B cell (primary cell): ENCODE measurements at regions of chr22 and their contacts with region 1.

Region 1: GRCh38 chr22:40922484-40923303 is 28.5 kb upstream of the RBX1 start:
- DNase-seq: peak; percentile 83
- ATAC-seq: peak; percentile 94
- H3K4me3 ChIP-seq: peak overlapping the region in 2 of 5 experiments; percentile 12 to 47
- H3K4me3 Mint-ChIP-seq: peak overlapping the region; percentile 67
- H3K27ac ChIP-seq: no peak overlapping the region
- H3K27ac Mint-ChIP-seq: peak overlapping the region; percentile 32
- H3K4me1 ChIP-seq: peaks cover 4 to 5% of the 10 kb centered on the region in 2 donors
- H3K4me1 Mint-ChIP-seq: peaks cover 4% of the 10 kb centered on the region
- H3K27me3 ChIP-seq: no peaks in the 10 kb centered on the region
- H3K27me3 Mint-ChIP-seq: no peaks in the 10 kb centered on the region
- CTCF ChIP-seq: peak; percentile 87

Region 2: DNA sequence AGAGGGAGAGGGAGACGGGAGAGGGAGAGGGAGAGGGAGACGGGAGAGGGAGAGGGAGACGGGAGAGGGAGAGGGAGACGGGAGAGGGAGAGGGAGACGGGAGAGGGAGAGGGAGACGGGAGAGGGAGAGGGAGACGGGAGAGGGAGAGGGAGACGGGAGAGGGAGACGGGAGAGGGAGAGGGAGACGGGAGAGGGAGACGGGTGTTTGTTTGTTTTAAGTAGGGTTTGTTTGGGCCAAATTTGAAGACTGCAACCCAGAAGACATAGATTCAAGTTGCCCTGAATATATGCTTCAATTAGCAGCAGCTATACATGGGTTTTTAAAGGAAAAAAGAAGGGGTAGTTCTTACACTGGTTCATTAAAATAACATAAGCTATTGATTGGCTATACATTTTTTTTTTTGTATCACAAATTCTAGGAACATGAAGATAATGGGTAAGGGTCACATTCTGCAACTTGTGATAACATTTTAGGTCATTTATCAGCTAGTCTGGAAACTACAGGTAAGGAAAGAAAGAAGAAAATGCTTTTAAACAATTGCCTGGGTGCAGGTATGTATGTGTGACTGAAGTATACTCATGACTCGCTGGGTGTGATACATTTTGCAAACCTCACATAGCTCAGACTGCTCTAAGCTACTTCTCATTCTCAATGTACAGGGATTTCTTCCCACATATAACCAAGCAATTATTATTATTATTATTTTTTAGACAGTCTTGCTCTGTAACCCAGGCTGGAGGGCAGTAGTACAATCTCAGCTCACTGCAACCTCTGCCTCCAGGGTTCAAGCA is 176.1 kb before region 1 on chr22:
- CTCF ChIA-PET with region 1: no interaction called
- POLR2A ChIA-PET with region 1: no interaction called
- intact Hi-C with region 1: no loop called
- DNase-seq: no peak
- ATAC-seq: no peak
- H3K4me3 ChIP-seq: no peak overlapping the region
- H3K4me3 Mint-ChIP-seq: no peak overlapping the region
- H3K27ac ChIP-seq: no peak overlapping the region
- H3K27ac Mint-ChIP-seq: no peak overlapping the region
- H3K4me1 ChIP-seq: no peaks in the 10 kb centered on the region
- H3K4me1 Mint-ChIP-seq: no peaks in the 10 kb centered on the region
- H3K27me3 ChIP-seq: no peaks in the 10 kb centered on the region
- H3K27me3 Mint-ChIP-seq: no peaks in the 10 kb centered on the region
- CTCF ChIP-seq: no peak

Region 3: DNA sequence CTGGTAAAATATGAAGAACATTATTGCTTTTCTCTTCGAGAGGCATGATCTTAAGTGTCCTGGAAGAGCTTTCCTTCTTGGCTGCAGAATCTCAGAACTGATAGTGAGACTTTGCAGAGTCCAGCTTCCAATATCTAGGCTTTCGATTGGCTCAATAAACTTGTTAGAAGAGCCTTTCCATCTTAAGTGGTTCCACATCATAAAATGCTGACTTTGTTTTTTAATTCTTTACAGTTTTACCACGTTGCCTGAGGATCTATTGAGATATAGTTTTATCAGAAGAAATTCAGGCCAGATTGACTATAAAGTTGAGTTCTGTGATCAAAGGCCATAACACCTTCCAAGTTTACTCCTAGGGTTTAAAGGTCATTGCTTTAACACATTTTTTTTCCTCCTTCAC is 45.2 kb before region 1 on chr22:
- CTCF ChIA-PET with region 1: no interaction called
- POLR2A ChIA-PET with region 1: no interaction called
- intact Hi-C with region 1: no loop called
- DNase-seq: no peak
- ATAC-seq: no peak
- H3K4me3 ChIP-seq: no peak overlapping the region
- H3K4me3 Mint-ChIP-seq: no peak overlapping the region
- H3K27ac ChIP-seq: no peak overlapping the region
- H3K27ac Mint-ChIP-seq: no peak overlapping the region
- H3K4me1 ChIP-seq: no peaks in the 10 kb centered on the region
- H3K4me1 Mint-ChIP-seq: no peaks in the 10 kb centered on the region
- H3K27me3 ChIP-seq: no peaks in the 10 kb centered on the region
- H3K27me3 Mint-ChIP-seq: no peaks in the 10 kb centered on the region
- CTCF ChIP-seq: no peak

Region 4: GRCh38 chr22:40890881-40891280 is 31.8 kb before region 1 on chr22:
- CTCF ChIA-PET with region 1: no interaction called
- POLR2A ChIA-PET with region 1: no interaction called
- intact Hi-C with region 1: no loop called
- DNase-seq: no peak
- ATAC-seq: no peak
- H3K4me3 ChIP-seq: no peak overlapping the region
- H3K4me3 Mint-ChIP-seq: no peak overlapping the region
- H3K27ac ChIP-seq: no peak overlapping the region
- H3K27ac Mint-ChIP-seq: no peak overlapping the region
- H3K4me1 ChIP-seq: no peaks in the 10 kb centered on the region
- H3K4me1 Mint-ChIP-seq: no peaks in the 10 kb centered on the region
- H3K27me3 ChIP-seq: no peaks in the 10 kb centered on the region
- H3K27me3 Mint-ChIP-seq: no peaks in the 10 kb centered on the region
- CTCF ChIP-seq: no peak

Region 5: GRCh38 chr22:40950962-40951794 is 28.5 kb after region 1 on chr22 and contains the start of gene RBX1:
- CTCF ChIA-PET with region 1: interaction called, 65 read pairs
- POLR2A ChIA-PET with region 1: interaction called, 25 read pairs
- intact Hi-C with region 1: loop called (anchors 1 kb)
- DNase-seq: peak; percentile 100
- ATAC-seq: peak; percentile 82
- H3K4me3 ChIP-seq: peak within 1 kb of the TSS; percentile 88 to 95 (median 92)
- H3K4me3 Mint-ChIP-seq: peak within 1 kb of the TSS; percentile 100
- H3K27ac ChIP-seq: peak within 1 kb of the TSS; percentile 99 to 100
- H3K27ac Mint-ChIP-seq: peak within 1 kb of the TSS; percentile 100
- H3K4me1 ChIP-seq: peaks cover 18 to 21% of the 10 kb centered on the region in 2 donors
- H3K4me1 Mint-ChIP-seq: peaks cover 27% of the 10 kb centered on the region
- H3K27me3 ChIP-seq: no peaks in the 10 kb centered on the region
- H3K27me3 Mint-ChIP-seq: no peaks in the 10 kb centered on the region
- CTCF ChIP-seq: no peak
- total RNA-seq, gene RBX1: 49.8 and 50.7 TPM in 2 replicates

Region 6: GRCh38 chr22:41070665-41071331 is 148.1 kb after region 1 on chr22:
- CTCF ChIA-PET with region 1: interaction called, 14 read pairs
- POLR2A ChIA-PET with region 1: interaction called, 3 read pairs
- intact Hi-C with region 1: loop called (anchors 1 kb)
- DNase-seq: no peak
- ATAC-seq: no peak
- H3K4me3 ChIP-seq: no peak overlapping the region
- H3K4me3 Mint-ChIP-seq: no peak overlapping the region
- H3K27ac ChIP-seq: peak overlapping the region in 1 of 2 donors; percentile 41
- H3K27ac Mint-ChIP-seq: no peak overlapping the region
- H3K4me1 ChIP-seq: peaks cover 33 to 34% of the 10 kb centered on the region in 2 donors
- H3K4me1 Mint-ChIP-seq: peaks cover 28% of the 10 kb centered on the region
- H3K27me3 ChIP-seq: no peaks in the 10 kb centered on the region
- H3K27me3 Mint-ChIP-seq: no peaks in the 10 kb centered on the region
- CTCF ChIP-seq: no peak

Region 7: GRCh38 chr22:41117127-41117965 is 194.7 kb after region 1 on chr22:
- CTCF ChIA-PET with region 1: interaction called, 32 read pairs
- POLR2A ChIA-PET with region 1: no interaction called
- intact Hi-C with region 1: loop called (anchors 5 kb)
- DNase-seq: no peak
- ATAC-seq: no peak
- H3K4me3 ChIP-seq: no peak overlapping the region
- H3K4me3 Mint-ChIP-seq: no peak overlapping the region
- H3K27ac ChIP-seq: no peak overlapping the region
- H3K27ac Mint-ChIP-seq: peak overlapping the region; percentile 50
- H3K4me1 ChIP-seq: peaks cover 4 to 8% of the 10 kb centered on the region in 2 donors
- H3K4me1 Mint-ChIP-seq: peaks cover 34% of the 10 kb centered on the region
- H3K27me3 ChIP-seq: no peaks in the 10 kb centered on the region
- H3K27me3 Mint-ChIP-seq: no peaks in the 10 kb centered on the region
- CTCF ChIP-seq: no peak

Region 8: DNA sequence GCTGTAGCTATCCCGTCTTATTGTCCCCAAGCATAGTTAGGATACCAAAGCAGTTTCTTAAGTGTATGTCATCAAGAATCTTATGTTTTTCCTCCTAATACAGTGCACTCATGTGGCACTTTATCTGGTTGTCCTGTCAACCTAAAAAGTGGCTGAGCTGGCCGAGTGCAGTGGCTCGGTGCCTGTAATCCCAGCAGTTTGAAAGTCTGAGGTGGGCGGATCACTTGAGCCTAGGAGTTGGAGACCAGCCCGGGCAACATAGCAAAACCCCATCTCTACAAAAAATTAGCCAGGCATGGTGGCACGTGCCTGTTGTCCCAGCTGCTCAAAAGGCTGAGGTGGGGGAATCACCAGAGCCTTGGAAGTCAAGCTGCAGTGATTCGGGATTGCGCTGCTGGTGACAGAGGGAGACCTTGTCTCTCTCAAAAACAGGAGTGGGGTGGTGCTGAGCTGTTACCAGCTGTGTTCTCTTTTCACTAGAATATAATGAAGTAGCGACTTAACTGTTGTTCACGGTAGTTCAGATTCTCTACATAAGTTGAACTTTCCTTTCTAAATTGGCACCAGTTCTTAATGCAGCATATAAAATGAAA is 217.8 kb after region 1 on chr22:
- CTCF ChIA-PET with region 1: interaction called, 12 read pairs
- POLR2A ChIA-PET with region 1: interaction called, 3 read pairs
- intact Hi-C with region 1: no loop called
- DNase-seq: no peak
- ATAC-seq: no peak
- H3K4me3 ChIP-seq: no peak overlapping the region
- H3K4me3 Mint-ChIP-seq: no peak overlapping the region
- H3K27ac ChIP-seq: no peak overlapping the region
- H3K27ac Mint-ChIP-seq: no peak overlapping the region
- H3K4me1 ChIP-seq: no peaks in the 10 kb centered on the region
- H3K4me1 Mint-ChIP-seq: no peaks in the 10 kb centered on the region
- H3K27me3 ChIP-seq: no peaks in the 10 kb centered on the region
- H3K27me3 Mint-ChIP-seq: no peaks in the 10 kb centered on the region
- CTCF ChIP-seq: no peak

Region 9: DNA sequence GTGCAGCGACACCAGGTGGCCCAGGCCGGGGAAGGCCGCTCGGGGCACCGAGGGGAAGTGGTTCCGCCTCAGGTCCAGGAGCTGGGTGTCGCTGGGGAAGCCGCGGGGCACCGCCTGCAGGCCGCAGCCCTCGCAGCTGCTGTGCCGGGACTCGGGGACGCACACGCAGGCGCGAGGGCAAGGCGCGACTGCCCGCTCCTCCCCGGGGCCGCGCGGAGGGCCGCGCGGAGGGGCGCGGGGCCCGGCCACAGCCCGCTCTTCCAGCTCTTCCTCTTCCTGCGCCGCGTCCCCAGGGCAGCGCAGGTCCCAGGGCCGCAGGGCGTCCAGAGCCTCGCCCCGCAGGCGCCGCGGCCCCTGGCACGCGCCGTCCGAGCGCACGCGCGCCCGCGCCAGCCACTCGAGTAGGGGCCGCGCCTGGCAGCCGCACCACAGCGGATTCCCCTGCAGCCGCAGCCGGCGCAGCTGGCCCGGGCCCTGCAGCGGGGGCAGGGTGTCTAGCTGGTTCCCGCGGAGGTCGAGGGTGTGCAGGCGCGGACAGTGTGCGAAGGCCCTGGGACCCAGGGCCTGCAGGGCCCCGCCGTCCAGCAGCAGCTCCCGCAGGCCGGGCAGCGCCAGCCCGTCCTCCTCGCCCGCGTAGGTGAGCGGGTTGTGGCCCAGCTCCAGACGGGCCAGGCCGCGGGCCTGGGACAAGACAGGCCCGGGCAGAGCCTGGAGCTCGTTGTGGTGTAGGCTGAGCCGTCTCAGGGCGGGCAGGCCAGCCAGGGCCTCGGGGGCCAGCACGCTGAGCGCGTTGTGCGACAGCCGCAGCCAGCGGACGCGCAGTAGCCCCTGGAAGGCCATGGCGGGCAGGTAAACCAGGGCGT is 315.2 kb after region 1 on chr22:
- CTCF ChIA-PET with region 1: interaction called, 93 read pairs
- POLR2A ChIA-PET with region 1: interaction called, 8 read pairs
- intact Hi-C with region 1: no loop called
- DNase-seq: peak; percentile 90
- ATAC-seq: peak; percentile 97
- H3K4me3 ChIP-seq: peak overlapping the region in 4 of 5 experiments; percentile 14 to 57 (median 41)
- H3K4me3 Mint-ChIP-seq: peak overlapping the region; percentile 84
- H3K27ac ChIP-seq: no peak overlapping the region
- H3K27ac Mint-ChIP-seq: no peak overlapping the region
- H3K4me1 ChIP-seq: peaks cover 5 to 10% of the 10 kb centered on the region in 2 donors
- H3K4me1 Mint-ChIP-seq: peaks cover 7% of the 10 kb centered on the region
- H3K27me3 ChIP-seq: no peaks in the 10 kb centered on the region
- H3K27me3 Mint-ChIP-seq: no peaks in the 10 kb centered on the region
- CTCF ChIP-seq: peak; percentile 77